H1 (cell line): ENCODE measurements at regions of chr1 and their contacts with region 1.

Region 1: GRCh38 chr1:212994926-212995325 is 20.7 kb downstream of the ANGEL2 start:
- DNase-seq: no peak
- H3K4me3 ChIP-seq: no peak overlapping the region
- H3K27ac ChIP-seq: no peak overlapping the region
- H3K4me1 ChIP-seq: no peaks in the 10 kb centered on the region
- H3K27me3 ChIP-seq: peaks cover 0 to 1% (median 0%) of the 10 kb centered on the region in 4 experiments; a peak in 1 of 7 replicates
- CTCF ChIP-seq: no peak
- EP300 ChIP-seq: no peak
- POLR2A ChIP-seq: no peak
- RAD21 ChIP-seq: no peak

Region 2: DNA sequence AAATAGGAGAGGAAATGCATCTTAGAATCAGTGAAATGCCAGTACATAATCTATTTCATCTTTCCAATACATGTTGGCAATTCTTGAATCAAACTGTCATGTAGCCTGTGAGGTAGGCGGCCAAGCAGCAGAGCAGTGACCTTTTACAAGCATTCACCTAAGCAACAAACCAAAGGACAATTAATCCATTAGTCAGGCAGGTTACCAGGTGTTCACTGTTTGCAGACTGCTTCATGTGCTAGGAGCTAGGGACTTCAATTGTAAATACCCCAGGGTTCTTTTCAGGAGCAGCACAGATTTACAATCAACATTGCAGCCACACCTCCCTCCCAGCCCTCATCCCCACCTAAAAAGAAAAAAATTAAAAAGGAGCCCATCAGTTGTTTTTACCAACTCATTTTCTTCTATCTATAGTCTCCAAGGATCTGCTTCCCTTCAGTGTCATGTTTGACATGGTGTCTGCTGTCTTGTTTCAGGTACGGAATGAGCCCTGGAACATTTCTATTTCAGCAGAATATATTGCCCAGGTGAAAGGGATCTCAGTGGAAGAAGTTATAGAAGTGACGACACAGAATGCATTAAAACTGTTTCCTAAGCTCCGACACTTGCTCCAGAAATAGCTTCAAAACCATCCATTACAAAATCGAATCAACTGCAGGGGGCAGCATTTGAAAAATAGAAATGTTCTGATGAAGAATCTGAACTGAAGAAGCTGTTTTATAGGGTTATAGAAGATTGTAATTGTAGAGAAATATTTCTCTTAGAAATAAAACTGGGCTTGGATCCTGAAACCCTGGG is 180.2 kb before region 1 on chr1:
- CTCF ChIA-PET with region 1: interaction called, 12 read pairs
- POLR2A ChIA-PET with region 1: no interaction called
- DNase-seq: no peak
- H3K4me3 ChIP-seq: no peak overlapping the region
- H3K27ac ChIP-seq: no peak overlapping the region
- H3K4me1 ChIP-seq: no peaks in the 10 kb centered on the region; a peak in 1 of 7 replicates
- H3K27me3 ChIP-seq: no peaks in the 10 kb centered on the region
- CTCF ChIP-seq: peak in 1 of 3 experiments; percentile 30; a peak in 2 of 4 replicates
- EP300 ChIP-seq: no peak
- POLR2A ChIP-seq: no peak
- RAD21 ChIP-seq: peak; percentile 33 to 44; a peak in 3 of 4 replicates

Region 3: GRCh38 chr1:212920896-212921295 is 74.0 kb before region 1 on chr1:
- CTCF ChIA-PET with region 1: interaction called, 13 read pairs
- POLR2A ChIA-PET with region 1: interaction called, 6 read pairs
- DNase-seq: peak in 1 of 2 experiments; percentile 51
- H3K4me3 ChIP-seq: no peak overlapping the region
- H3K27ac ChIP-seq: no peak overlapping the region
- H3K4me1 ChIP-seq: peaks cover 1 to 15% (median 10%) of the 10 kb centered on the region in 4 experiments
- H3K27me3 ChIP-seq: no peaks in the 10 kb centered on the region
- CTCF ChIP-seq: peak; percentile 52 to 78 (median 58)
- EP300 ChIP-seq: no peak
- POLR2A ChIP-seq: no peak
- RAD21 ChIP-seq: peak; percentile 59 to 70

Region 4: DNA sequence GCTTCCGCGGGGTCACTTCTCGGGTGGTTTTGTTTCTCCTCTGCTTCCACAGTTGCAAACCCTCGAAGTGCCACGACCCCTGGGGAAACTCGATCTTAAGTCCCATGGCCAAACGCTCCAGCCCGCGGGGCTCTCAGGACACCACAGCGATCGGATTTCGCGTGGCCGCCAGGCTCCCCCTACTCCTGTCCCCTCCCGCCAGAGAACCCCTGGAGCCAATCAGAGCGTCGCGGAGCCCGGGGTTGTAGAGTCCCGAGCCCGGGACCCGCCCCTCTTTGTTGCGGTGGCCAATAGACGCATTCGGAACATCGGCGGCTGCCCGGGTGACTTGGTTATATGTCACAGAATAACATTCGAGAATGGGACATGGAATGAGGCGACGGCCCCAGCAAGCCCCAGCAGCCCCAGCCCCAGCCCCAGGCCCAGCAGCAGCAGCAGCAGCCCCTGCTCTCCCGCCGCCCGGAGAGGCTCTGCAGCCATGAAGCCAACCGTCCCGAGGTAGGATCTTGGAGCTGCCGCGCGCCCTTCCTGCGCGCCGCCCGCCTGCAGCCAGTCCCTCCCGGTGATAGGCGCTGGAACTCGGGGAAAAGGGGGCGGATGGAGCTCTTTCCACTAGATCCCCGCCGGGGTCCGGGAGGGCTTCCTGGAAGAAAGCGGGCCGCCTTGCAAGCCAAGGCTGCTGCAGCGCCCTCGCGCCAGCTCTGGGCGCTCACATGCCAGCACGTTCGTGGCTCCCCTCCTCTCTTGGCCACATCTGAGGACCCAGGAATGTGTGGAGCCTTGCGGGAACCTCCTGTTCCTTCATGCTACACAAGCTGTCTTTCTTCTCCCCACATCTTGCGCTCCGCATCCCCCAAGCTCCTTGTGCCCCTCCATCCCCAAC is 44.4 kb before region 1 on chr1 and contains the start of gene VASH2:
- CTCF ChIA-PET with region 1: interaction called, 10 read pairs
- POLR2A ChIA-PET with region 1: no interaction called
- DNase-seq: peak; percentile 47 to 89
- H3K4me3 ChIP-seq: peak within 1 kb of the TSS; percentile 55 to 95 (median 94)
- H3K27ac ChIP-seq: no peak within 1 kb of the TSS
- H3K4me1 ChIP-seq: peaks cover 3 to 15% (median 11%) of the 10 kb centered on the region in 4 experiments
- H3K27me3 ChIP-seq: peaks cover 0 to 4% (median 0%) of the 10 kb centered on the region in 4 experiments; a peak in 1 of 7 replicates
- CTCF ChIP-seq: no peak
- EP300 ChIP-seq: no peak
- POLR2A ChIP-seq: peak in 1 of 2 experiments; percentile 31; a peak in 1 of 3 replicates
- RAD21 ChIP-seq: no peak
- total RNA-seq, gene VASH2: 184 and 187 TPM in 2 replicates

Region 5: DNA sequence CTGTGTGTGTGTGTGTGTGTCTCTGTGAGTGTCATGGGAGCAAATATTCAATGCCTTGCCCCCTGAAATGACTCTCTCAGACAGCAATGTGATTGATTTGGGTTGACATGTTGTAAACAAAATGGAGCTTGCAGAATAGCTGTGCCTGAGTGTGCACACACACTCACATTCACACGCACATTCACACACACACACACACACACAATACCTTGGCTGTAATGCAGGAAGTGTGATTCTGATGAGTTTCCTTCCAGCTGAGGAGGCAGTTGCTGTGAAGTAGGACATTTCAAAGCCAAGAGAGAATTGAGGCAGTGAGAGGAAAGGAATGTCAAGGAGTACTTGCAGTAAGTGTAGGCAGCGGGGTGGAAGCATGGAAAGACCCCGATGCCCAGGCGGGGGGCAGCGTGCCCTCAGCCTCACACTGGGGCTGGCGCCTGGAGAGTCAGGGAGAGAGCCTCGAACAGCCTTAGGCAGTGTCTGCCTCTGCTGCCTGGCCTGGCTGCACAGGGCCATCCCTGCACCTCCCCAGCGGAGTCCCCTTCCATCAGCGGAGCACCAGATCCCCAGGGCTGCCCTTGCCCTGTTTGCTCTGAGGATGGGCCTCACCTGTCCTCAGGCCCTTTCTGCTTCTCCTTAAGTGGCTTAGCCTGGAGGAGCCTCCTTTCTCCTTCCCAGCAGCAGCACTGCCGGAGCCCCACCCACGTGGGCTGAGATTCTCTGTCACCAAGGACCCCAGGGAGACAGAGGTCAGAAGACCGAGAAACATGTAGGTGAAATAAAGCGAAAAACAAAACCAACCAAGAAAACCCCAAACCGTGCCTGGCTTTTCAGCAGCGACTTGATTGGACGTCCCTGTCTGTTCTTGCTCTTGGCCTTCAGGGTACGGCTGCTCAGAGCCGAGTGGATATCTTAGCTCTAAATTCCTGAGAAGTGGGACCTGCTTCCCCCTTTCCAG is 35.4 kb before region 1 on chr1:
- CTCF ChIA-PET with region 1: interaction called, 41 read pairs
- POLR2A ChIA-PET with region 1: interaction called, 4 read pairs
- DNase-seq: no peak
- H3K4me3 ChIP-seq: no peak overlapping the region
- H3K27ac ChIP-seq: peak overlapping the region; percentile 7; the same call in 1 of the 2 replicates
- H3K4me1 ChIP-seq: peaks cover 3 to 12% (median 7%) of the 10 kb centered on the region in 4 experiments; a peak in 5 of 7 replicates
- H3K27me3 ChIP-seq: no peaks in the 10 kb centered on the region
- CTCF ChIP-seq: no peak
- EP300 ChIP-seq: no peak
- POLR2A ChIP-seq: no peak
- RAD21 ChIP-seq: no peak

Region 6: DNA sequence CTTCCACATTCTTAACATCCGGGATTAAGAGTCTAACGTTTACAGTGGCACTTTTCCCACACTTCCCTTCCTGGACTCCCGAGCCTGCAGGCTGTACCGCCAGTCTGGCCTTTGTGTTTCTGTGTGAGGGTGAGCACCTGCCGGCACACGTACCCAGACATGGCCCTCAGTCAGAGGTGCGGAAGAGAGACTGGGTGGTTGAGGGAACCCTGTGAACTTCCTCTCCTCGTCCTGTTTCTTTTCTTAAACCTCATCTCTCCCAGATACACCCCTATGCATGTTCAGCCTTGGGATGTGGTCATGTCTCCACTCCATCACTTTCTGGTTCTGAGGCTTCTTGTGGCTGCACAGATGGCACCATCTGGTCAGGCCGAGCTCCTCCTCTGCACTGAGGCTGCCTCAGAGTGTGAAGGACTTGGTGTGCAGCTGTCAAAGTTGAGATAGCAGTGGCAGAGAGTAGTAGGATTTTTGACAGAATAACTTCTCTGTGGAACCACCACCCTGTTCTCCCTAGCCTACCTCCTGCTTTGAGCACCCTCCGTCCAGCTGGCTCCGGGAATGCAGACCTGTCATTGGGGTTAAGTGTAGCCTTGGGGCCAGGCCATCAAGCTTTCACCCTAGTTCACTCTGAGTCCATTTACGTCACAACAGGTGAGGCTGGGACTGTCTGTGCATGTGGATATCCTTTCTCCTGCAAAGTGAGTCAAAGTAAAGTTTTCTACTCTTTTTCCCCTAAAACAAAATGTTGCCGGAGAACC is 13.2 kb before region 1 on chr1:
- CTCF ChIA-PET with region 1: interaction called, 40 read pairs
- POLR2A ChIA-PET with region 1: interaction called, 38 read pairs
- DNase-seq: peak in 1 of 2 experiments; percentile 43
- H3K4me3 ChIP-seq: no peak overlapping the region
- H3K27ac ChIP-seq: no peak overlapping the region
- H3K4me1 ChIP-seq: peaks cover 0 to 8% (median 4%) of the 10 kb centered on the region in 4 experiments
- H3K27me3 ChIP-seq: no peaks in the 10 kb centered on the region
- CTCF ChIP-seq: no peak
- EP300 ChIP-seq: no peak
- POLR2A ChIP-seq: peak; percentile 61 to 71
- RAD21 ChIP-seq: no peak

Region 7: GRCh38 chr1:213008564-213008963 is 13.6 kb after region 1 on chr1:
- CTCF ChIA-PET with region 1: interaction called, 11 read pairs
- POLR2A ChIA-PET with region 1: interaction called, 5 read pairs
- DNase-seq: no peak
- H3K4me3 ChIP-seq: no peak overlapping the region
- H3K27ac ChIP-seq: no peak overlapping the region
- H3K4me1 ChIP-seq: no peaks in the 10 kb centered on the region
- H3K27me3 ChIP-seq: no peaks in the 10 kb centered on the region
- CTCF ChIP-seq: no peak
- EP300 ChIP-seq: no peak
- POLR2A ChIP-seq: no peak
- RAD21 ChIP-seq: no peak

Region 8: GRCh38 chr1:213083112-213083445 is 88.2 kb after region 1 on chr1:
- CTCF ChIA-PET with region 1: no interaction called
- POLR2A ChIA-PET with region 1: no interaction called
- DNase-seq: no peak
- H3K4me3 ChIP-seq: no peak overlapping the region
- H3K27ac ChIP-seq: no peak overlapping the region
- H3K4me1 ChIP-seq: no peaks in the 10 kb centered on the region
- H3K27me3 ChIP-seq: no peaks in the 10 kb centered on the region
- CTCF ChIP-seq: no peak
- EP300 ChIP-seq: no peak
- POLR2A ChIP-seq: no peak
- RAD21 ChIP-seq: no peak